A673 (cell line): ENCODE measurements at regions of chr19 and their contacts with region 1.

Region 1: DNA sequence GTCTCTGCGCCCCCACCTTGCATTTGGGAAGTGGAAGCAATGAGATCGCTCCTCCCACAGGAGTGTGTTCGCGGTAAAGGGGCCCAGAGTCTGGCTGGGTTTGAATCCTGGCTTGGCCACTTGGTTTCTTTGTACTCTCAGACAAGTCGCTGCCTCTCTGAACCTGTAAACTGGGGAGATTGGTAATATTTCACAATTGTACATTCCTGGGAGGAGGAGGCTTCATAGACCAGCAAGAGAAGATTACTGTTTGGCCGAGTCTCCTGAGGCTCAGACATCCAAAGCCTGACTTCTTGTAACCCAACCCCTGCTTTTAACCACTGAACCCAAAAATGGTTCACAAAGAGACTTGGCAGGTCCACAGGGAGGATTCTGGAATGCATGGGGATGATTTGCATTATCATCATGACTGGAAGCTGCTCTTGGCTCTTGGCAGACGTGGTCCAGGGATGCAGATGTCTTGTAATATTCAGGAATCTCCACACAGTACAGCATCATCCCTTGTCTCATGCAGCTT is 13.6 kb upstream of the STRN4 start:
- DNase-seq: no peak
- H3K4me3 ChIP-seq: no peak overlapping the region
- H3K27ac ChIP-seq: no peak overlapping the region
- H3K4me1 ChIP-seq: no peaks in the 10 kb centered on the region
- H3K27me3 ChIP-seq: no peaks in the 10 kb centered on the region
- CTCF ChIP-seq: no peak

Region 2: DNA sequence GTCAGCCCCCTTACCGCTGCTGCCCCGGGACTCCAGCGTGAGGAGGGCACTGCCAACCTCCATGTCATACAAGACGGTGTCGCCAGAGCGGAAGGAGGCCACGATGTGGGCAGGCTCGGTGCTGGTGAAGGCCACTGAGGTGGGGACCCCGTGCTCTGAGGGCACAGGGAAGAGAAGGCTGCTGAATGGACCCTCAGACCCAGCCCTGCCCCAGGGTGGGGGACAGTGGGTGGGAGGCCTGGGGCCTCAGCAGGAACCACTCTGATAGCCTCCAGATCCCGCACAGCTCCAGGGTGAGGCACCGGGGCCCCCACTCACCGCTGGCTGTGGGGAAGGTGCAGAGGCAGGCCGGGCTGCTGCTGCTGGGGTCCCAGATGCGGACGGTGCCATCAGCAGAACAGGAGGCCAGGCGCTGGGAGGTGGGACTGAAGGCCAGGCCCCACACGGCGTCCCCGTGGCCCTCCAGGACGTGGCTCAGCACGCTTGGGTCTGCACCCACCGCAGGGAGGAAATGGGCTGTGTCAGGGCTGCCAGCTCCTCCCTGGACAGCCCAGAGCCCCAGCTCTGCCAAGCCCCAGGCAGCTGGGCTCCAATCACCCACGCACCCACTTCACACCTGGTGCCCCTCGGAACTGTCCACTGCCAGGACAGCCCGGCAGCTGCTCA is 36.9 kb before region 1 on chr19:
- CTCF ChIA-PET with region 1: no interaction called
- POLR2A ChIA-PET with region 1: interaction called, 10 read pairs
- intact Hi-C with region 1: no loop called
- DNase-seq: no peak
- H3K4me3 ChIP-seq: no peak overlapping the region
- H3K27ac ChIP-seq: no peak overlapping the region
- H3K4me1 ChIP-seq: no peaks in the 10 kb centered on the region
- H3K27me3 ChIP-seq: no peaks in the 10 kb centered on the region
- CTCF ChIP-seq: no peak

Region 3: DNA sequence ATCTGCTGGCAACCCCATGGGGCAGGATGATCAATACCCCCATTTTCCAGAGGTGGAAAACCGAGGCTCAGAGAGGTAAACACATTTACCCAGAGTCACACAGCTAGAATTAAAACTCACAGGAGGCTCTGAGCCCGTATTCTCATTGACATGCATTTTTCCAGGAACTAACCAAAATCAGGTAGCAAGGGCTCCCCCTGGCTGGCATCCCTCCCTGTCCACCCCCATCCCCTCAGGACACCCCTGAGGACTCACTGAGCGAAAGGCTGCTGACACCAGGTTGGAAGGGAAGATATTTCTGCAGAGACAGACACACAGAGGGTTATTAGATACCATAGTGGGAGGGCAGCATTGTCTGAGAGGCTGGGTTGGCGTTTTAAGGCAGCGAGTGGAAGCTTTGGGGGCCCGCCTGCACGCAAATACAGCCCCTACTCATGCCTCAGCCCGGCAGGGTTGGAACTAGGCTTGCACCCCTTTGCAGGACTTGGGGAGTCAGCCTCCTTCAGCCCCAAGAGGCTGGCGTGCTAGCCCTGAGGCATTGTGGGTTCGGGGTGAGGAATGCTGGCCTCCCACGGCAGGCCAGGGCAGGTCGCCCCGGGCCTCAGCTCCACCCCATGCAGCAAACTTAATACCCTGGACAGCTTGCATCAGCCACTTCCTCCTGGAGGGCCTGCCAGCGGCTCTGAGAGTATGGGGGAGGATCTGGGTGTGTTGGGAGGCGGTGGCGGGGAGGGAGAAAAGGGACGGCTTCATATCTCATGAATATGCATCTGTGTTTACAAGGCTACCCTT is 24.6 kb after region 1 on chr19:
- CTCF ChIA-PET with region 1: no interaction called
- POLR2A ChIA-PET with region 1: no interaction called
- intact Hi-C with region 1: no loop called
- DNase-seq: peak; percentile 95
- H3K4me3 ChIP-seq: peak overlapping the region; percentile 99
- H3K27ac ChIP-seq: peak overlapping the region; percentile 92
- H3K4me1 ChIP-seq: peaks cover 24% of the 10 kb centered on the region
- H3K27me3 ChIP-seq: no peaks in the 10 kb centered on the region
- CTCF ChIP-seq: peak; percentile 54

Region 4: DNA sequence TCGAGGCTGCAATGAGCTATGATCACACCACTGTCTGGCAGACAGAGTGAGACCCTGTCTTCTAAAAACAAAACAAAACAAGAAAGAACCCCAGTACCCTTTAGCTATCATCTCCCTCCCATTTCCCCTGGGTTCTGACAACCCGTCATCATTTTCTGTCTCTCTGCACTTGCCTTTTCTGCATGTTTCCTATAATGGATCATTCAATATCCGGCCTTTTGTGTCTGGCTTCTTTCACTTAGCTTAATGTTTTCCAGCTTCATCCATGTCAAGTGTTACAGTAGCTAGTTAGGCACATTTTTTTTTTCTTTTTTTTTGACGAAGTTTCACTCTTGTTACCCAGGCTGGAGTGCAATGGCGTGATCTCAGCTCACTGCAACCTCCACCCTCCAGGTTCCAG is 74.2 kb after region 1 on chr19:
- CTCF ChIA-PET with region 1: no interaction called
- POLR2A ChIA-PET with region 1: no interaction called
- intact Hi-C with region 1: loop called (anchors 2 kb)
- DNase-seq: peak; percentile 48
- H3K4me3 ChIP-seq: no peak overlapping the region
- H3K27ac ChIP-seq: no peak overlapping the region
- H3K4me1 ChIP-seq: no peaks in the 10 kb centered on the region
- H3K27me3 ChIP-seq: no peaks in the 10 kb centered on the region
- CTCF ChIP-seq: no peak

Region 5: GRCh38 chr19:46990991-46991676 is 231.3 kb after region 1 on chr19:
- CTCF ChIA-PET with region 1: no interaction called
- POLR2A ChIA-PET with region 1: no interaction called
- intact Hi-C with region 1: loop called (anchors 5 kb)
- DNase-seq: peak; percentile 93
- H3K4me3 ChIP-seq: peak overlapping the region; percentile 2
- H3K27ac ChIP-seq: peak overlapping the region; percentile 57
- H3K4me1 ChIP-seq: peaks cover 22% of the 10 kb centered on the region
- H3K27me3 ChIP-seq: no peaks in the 10 kb centered on the region
- CTCF ChIP-seq: peak; percentile 93